Mammary epithelial cell (primary cell): ENCODE measurements at regions of chr3 and their contacts with region 1.

Region 1: GRCh38 chr3:127800508-127800907 is 21.8 kb downstream of the MGLL start:
- DNase-seq: peak; percentile 38
- H3K4me3 ChIP-seq: no peak overlapping the region
- H3K27ac ChIP-seq: peak overlapping the region; percentile 93
- H3K4me1 ChIP-seq: peaks cover 38% of the 10 kb centered on the region
- H3K27me3 ChIP-seq: no peaks in the 10 kb centered on the region
- CTCF ChIP-seq: no peak

Region 2: DNA sequence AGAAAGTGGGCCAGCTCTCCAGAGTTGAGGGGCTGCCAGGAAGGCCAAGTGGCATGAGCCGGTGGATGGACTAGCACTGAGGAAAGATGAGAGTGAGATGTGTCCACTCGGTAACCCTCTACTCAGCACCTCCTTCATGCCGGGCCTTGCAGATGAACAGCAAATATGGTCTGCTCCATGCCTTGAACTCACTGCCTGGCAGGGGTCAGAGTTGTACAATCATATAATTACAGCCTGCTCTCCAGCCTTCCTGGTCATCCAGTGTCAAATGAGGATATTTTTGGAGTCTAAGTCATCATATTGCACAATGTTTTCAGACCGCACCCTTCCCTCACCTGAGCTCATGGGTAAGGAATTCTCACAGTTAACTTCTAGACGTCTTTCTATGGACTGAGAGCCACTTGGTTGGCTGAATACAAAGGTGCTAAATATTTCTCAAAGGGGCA is 16.9 kb after region 1 on chr3:
- CTCF ChIA-PET with region 1: no interaction called
- dilution Hi-C with region 1: no loop called
- in situ Hi-C with region 1: no loop called
- intact Hi-C with region 1: loop called (anchors 1 kb)
- DNase-seq: peak; percentile 93
- H3K4me3 ChIP-seq: no peak overlapping the region
- H3K27ac ChIP-seq: peak overlapping the region; percentile 80
- H3K4me1 ChIP-seq: peaks cover 42% of the 10 kb centered on the region
- H3K27me3 ChIP-seq: no peaks in the 10 kb centered on the region
- CTCF ChIP-seq: no peak

Region 3: DNA sequence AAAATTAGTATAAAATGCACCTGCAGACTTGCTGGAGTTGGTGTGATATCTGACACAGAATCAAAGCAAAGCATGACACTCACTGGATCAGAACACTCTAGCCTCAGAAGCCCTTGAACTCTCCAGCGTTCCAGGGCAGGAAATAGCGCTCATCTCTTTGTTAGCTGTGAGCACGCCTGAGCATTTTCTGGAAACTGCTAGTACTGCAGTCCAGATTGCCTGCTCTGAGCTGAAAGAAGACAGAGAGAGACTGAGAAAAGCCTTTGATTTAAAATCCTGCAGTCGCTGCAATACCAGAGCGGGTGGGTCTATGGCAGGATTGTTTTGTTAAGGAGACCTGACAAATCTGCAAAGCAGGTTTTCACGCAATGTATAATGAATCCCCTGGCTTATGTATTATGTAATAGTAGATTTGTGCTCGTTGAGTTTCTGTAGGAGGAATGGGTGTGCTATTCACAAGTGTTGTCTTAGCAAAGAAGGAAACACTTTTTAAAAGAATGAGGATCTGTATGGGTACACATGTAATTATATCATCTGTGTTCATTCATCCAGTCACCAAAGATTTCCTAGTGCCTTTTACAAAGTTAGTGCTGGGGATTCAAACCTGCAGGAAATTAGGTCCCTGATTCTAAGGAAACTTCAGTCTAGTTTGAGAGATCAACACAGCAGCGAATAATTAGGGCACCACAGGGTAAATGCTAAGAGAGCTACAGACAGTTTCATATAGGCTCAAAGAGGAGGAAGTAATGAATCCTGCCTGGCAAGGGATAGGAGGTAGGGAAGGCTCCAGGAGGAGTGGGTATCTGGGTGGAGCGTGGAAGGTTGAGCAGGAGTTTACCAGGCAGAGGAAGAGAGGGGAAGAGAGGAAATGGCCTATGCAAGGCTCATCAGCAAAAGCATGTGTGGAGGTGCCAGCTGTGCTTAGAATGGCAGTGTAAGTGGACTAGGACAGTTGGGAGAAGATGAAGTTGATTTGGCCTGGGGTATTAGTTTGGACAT is 47.9 kb after region 1 on chr3:
- CTCF ChIA-PET with region 1: no interaction called
- dilution Hi-C with region 1: no loop called
- in situ Hi-C with region 1: no loop called
- intact Hi-C with region 1: no loop called
- DNase-seq: no peak
- H3K4me3 ChIP-seq: no peak overlapping the region
- H3K27ac ChIP-seq: no peak overlapping the region
- H3K4me1 ChIP-seq: no peaks in the 10 kb centered on the region
- H3K27me3 ChIP-seq: no peaks in the 10 kb centered on the region
- CTCF ChIP-seq: no peak

Region 4: GRCh38 chr3:128262457-128262987 is 462.0 kb after region 1 on chr3:
- CTCF ChIA-PET with region 1: no interaction called
- dilution Hi-C with region 1: no loop called
- in situ Hi-C with region 1: no loop called
- intact Hi-C with region 1: no loop called
- DNase-seq: no peak
- H3K4me3 ChIP-seq: no peak overlapping the region
- H3K27ac ChIP-seq: no peak overlapping the region
- H3K4me1 ChIP-seq: no peaks in the 10 kb centered on the region
- H3K27me3 ChIP-seq: no peaks in the 10 kb centered on the region
- CTCF ChIP-seq: no peak